Activated naive CD8-positive, alpha-beta T cell treated with anti-CD3 and anti-CD28 coated beads, Interleukin-2, amount 10 ng/mL, durations not matched to agents 7 days and 5 days (primary cell): ENCODE measurements at regions of chr11 and their contacts with region 1.

Region 1: DNA sequence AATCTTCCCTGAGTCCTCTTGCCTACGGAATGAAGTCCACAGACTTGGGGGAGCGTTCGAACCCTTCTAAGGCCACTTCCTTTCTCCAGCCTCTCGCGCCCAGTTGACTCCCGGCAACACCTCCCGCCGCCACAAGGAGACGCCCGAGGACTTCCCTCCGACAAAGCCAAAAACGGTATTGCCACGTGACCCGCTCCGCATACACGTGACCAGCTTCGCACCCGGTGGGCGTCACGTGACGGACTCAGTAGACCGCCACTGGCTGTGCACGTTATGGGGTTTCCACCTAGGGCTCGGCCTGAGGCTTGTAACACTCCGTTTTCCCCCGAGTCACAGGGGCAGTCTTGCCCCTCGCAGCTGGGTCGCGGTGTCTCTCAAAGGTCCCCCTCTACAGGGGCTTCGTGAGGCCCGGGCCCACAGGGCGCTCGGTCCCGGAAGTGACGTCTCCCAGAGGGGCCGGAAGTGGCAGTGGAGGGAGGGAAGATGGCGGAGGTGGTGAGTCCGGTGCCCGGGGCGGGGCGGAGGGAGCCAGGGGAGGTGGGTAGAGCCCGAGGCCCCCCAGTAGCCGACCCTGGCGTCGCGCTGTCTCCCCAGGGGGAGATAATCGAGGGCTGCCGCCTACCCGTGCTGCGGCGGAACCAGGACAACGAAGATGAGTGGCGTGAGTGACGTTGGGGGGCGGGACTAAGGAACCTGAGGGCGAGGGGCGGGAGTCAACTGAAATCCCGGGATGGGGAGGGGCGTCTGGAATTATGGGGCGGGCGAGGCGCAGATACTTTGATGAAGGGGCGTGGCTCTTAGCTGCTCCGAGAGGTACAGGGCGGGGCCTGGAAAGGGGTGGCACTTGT is at the start of gene KAT5:
- DNase-seq: peak; percentile 98
- ATAC-seq: peak; percentile 83
- H3K4me3 Mint-ChIP-seq: peak within 1 kb of the TSS; percentile 95
- H3K27ac Mint-ChIP-seq: peak within 1 kb of the TSS; percentile 97
- H3K4me1 Mint-ChIP-seq: peaks cover 25% of the 10 kb centered on the region
- H3K27me3 Mint-ChIP-seq: no peaks in the 10 kb centered on the region
- total RNA-seq, gene KAT5: 75.6 to 82.6 TPM

Region 2: GRCh38 chr11:65477149-65477965 is 234.7 kb before region 1 on chr11:
- POLR2A ChIA-PET with region 1: no interaction called
- DNase-seq: peak; percentile 92
- ATAC-seq: peak; percentile 85
- H3K4me3 Mint-ChIP-seq: peak overlapping the region; percentile 100
- H3K27ac Mint-ChIP-seq: peak overlapping the region; percentile 98
- H3K4me1 Mint-ChIP-seq: peaks cover 9% of the 10 kb centered on the region
- H3K27me3 Mint-ChIP-seq: peaks cover 4% of the 10 kb centered on the region

Region 3: GRCh38 chr11:65685981-65686380 is 26.0 kb before region 1 on chr11:
- POLR2A ChIA-PET with region 1: no interaction called
- DNase-seq: no peak
- ATAC-seq: no peak
- H3K4me3 Mint-ChIP-seq: no peak overlapping the region
- H3K27ac Mint-ChIP-seq: no peak overlapping the region
- H3K4me1 Mint-ChIP-seq: no peaks in the 10 kb centered on the region
- H3K27me3 Mint-ChIP-seq: peaks cover 15% of the 10 kb centered on the region

Region 4: DNA sequence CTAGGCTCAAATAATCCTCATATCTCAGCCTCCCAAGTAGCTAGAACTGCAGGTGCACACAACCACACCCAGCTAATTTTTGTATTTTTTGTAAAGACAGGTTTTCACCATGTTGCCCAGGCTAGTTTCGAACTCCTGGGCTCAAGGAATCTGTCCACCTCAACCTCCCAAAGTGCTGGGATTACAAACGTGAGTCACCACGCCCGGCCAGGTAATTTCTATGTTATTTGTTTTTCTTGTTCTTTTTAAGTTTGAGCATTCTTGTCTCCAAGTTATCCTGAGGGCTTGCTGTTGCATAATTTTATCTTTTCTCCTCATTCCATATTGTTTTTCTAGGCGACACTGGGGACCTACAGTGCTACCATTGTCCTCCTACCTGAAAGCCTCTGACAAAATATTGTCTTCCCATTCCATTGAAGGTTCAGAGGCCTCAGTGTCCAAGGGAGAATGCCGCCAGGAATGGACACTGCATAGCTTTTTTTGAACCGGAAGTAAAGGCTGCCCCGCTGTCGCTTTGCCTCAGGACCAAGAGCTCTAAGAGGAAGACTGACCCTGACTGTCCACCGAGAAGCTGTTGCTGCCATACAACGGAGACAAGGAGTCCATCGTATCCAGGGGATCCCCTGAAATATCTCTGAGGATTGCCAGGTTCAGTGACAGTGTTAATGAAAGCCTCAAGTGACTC is 59.0 kb after region 1 on chr11:
- POLR2A ChIA-PET with region 1: interaction called, 12 read pairs
- DNase-seq: no peak
- ATAC-seq: no peak
- H3K4me3 Mint-ChIP-seq: no peak overlapping the region
- H3K27ac Mint-ChIP-seq: no peak overlapping the region
- H3K4me1 Mint-ChIP-seq: peaks cover 11% of the 10 kb centered on the region
- H3K27me3 Mint-ChIP-seq: peaks cover 5% of the 10 kb centered on the region

Region 5: GRCh38 chr11:65779851-65780577 is 68.0 kb after region 1 on chr11:
- POLR2A ChIA-PET with region 1: interaction called, 17 read pairs
- DNase-seq: peak; percentile 95
- ATAC-seq: peak; percentile 77
- H3K4me3 Mint-ChIP-seq: peak overlapping the region; percentile 89
- H3K27ac Mint-ChIP-seq: peak overlapping the region; percentile 91
- H3K4me1 Mint-ChIP-seq: peaks cover 15% of the 10 kb centered on the region
- H3K27me3 Mint-ChIP-seq: peaks cover under 1% of the 10 kb centered on the region

Region 6: DNA sequence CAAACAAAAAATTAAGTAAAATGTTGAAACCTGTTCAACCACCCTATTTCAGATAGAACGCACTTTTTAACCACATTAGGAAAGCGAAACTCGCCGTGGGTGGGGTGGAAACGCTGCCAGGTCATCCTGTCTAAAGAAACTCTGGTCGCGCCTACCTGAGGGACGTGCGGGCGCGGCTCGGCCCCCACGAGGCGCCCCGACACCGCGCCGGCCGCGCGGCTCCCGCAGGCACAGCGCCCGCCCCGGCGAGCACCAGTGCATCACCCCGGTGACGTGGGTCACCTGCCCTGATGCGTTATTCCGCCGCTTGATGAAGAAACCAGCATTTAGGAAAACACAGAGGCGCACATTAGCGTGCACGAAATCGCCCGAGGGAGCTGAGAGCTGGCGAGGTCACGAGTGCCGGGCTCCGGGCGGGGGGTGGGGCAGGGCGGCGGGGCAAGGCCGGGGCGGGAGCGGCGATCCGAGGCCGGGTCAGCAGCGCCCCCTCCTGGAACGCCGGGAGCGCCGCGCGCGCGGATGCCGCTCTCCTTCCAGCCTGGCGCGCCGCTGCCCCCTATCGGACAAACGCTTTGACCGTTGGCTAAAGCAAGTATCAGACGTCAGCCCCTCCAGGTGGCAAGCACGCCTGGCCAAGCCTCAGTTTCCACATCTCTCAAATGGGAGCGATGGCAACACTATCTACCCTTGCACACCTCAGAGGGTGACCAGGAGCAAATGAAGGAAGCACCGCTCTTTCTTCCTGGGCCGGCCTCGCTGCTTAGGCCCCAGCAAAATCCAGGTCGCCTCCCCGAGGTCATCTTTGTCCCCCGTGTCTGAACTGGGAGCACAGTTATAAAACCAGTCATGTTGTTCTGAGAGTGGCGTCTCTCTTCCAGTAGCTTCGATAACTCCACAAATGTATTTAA is 106.1 kb after region 1 on chr11:
- POLR2A ChIA-PET with region 1: interaction called, 20 read pairs
- DNase-seq: peak; percentile 99
- ATAC-seq: peak; percentile 90
- H3K4me3 Mint-ChIP-seq: peak overlapping the region; percentile 89
- H3K27ac Mint-ChIP-seq: peak overlapping the region; percentile 83
- H3K4me1 Mint-ChIP-seq: peaks cover 12% of the 10 kb centered on the region
- H3K27me3 Mint-ChIP-seq: peaks cover 3% of the 10 kb centered on the region